ENCODE measurements at regions of chr11 and their contacts with region 1.

Region 1: GRCh38 chr11:83071567-83072349 is at the start of gene RAB30:
- DNase-seq: peak; percentile 97
- H3K4me3 Mint-ChIP-seq: no peak within 1 kb of the TSS
- H3K27ac Mint-ChIP-seq: no peak within 1 kb of the TSS
- H3K4me1 Mint-ChIP-seq: peaks cover 54% of the 10 kb centered on the region
- H3K27me3 Mint-ChIP-seq: no peaks in the 10 kb centered on the region
- total RNA-seq, gene RAB30: 8.8 to 11.1 TPM

Region 2: GRCh38 chr11:82059505-82059904 is 1012.3 kb before region 1 on chr11:
- CTCF ChIA-PET with region 1: no interaction called
- intact Hi-C with region 1: no loop called
- DNase-seq: no peak
- H3K4me3 Mint-ChIP-seq: no peak overlapping the region
- H3K27ac Mint-ChIP-seq: no peak overlapping the region
- H3K4me1 Mint-ChIP-seq: no peaks in the 10 kb centered on the region
- H3K27me3 Mint-ChIP-seq: no peaks in the 10 kb centered on the region

Region 3: DNA sequence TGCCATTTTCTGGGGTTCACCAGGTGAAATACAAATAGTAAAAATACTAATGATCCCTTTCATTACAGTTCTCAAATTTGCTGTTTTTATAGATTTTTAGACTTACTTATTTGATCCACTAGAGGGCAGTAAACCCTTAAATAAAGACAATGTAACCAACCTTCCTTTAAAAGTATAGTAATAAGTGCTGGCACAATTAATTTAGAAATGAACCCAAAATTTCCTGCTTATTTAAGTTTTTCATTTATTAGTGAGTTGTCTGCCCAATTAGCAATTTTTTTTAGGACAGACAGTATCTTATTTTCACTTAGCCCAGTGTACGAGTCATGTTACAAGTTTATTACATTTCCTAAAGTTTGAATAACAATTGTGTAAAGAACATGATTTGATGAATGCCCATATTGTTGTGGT is 165.5 kb before region 1 on chr11:
- CTCF ChIA-PET with region 1: interaction called, 8 read pairs
- intact Hi-C with region 1: loop called (anchors 1 kb)
- DNase-seq: no peak
- H3K4me3 Mint-ChIP-seq: no peak overlapping the region
- H3K27ac Mint-ChIP-seq: no peak overlapping the region
- H3K4me1 Mint-ChIP-seq: peaks cover 61% of the 10 kb centered on the region
- H3K27me3 Mint-ChIP-seq: no peaks in the 10 kb centered on the region

Region 4: GRCh38 chr11:82969811-82970210 is 101.9 kb before region 1 on chr11:
- CTCF ChIA-PET with region 1: no interaction called
- intact Hi-C with region 1: loop called (anchors 2 kb)
- DNase-seq: peak; percentile 41
- H3K4me3 Mint-ChIP-seq: peak overlapping the region; percentile 47
- H3K27ac Mint-ChIP-seq: peak overlapping the region; percentile 59
- H3K4me1 Mint-ChIP-seq: peaks cover 50% of the 10 kb centered on the region
- H3K27me3 Mint-ChIP-seq: no peaks in the 10 kb centered on the region

Region 5: DNA sequence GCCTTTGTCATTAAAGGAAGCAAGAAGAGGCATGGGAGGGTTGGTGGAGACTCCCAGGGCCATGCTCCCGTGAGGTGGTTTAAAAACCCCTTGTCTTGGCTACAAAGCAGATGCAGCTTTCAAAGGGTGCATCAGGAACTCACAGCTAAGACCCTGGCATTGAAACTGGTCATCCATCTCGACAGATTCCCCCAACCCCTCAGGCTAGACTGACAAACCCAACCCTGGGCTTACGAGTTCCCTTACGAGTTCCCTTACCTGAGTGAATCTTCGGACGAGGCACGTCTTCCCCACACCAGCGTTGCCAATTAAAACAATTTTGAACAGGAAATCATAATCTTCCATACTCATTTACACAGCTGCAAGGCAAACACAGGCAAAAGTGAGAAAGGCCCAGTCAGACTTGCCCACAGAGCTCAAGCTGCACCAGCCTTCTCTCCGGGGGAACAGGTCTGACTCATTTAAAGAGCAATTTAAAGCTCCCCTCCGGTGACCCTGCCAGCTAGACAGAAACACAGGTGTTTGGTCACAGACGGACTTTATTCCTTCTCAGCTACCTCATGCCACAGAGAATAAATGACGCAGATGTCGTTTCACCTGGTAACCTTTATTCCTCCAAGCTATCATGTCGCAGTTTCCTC is 74.7 kb before region 1 on chr11:
- CTCF ChIA-PET with region 1: no interaction called
- intact Hi-C with region 1: loop called (anchors 1 kb)
- DNase-seq: peak; percentile 46
- H3K4me3 Mint-ChIP-seq: no peak overlapping the region
- H3K27ac Mint-ChIP-seq: peak overlapping the region; percentile 12
- H3K4me1 Mint-ChIP-seq: peaks cover 78% of the 10 kb centered on the region
- H3K27me3 Mint-ChIP-seq: no peaks in the 10 kb centered on the region

Region 6: GRCh38 chr11:83115551-83115950 is 43.8 kb after region 1 on chr11:
- CTCF ChIA-PET with region 1: no interaction called
- intact Hi-C with region 1: loop called (anchors 1 kb)
- DNase-seq: no peak
- H3K4me3 Mint-ChIP-seq: no peak overlapping the region
- H3K27ac Mint-ChIP-seq: no peak overlapping the region
- H3K4me1 Mint-ChIP-seq: peaks cover 51% of the 10 kb centered on the region
- H3K27me3 Mint-ChIP-seq: no peaks in the 10 kb centered on the region

Region 7: GRCh38 chr11:83156150-83156995 is 84.6 kb after region 1 on chr11:
- CTCF ChIA-PET with region 1: interaction called, 4 read pairs
- intact Hi-C with region 1: loop called (anchors 1 kb)
- DNase-seq: peak; percentile 99
- H3K4me3 Mint-ChIP-seq: peak overlapping the region; percentile 98
- H3K27ac Mint-ChIP-seq: peak overlapping the region; percentile 100
- H3K4me1 Mint-ChIP-seq: peaks cover 26% of the 10 kb centered on the region
- H3K27me3 Mint-ChIP-seq: no peaks in the 10 kb centered on the region

Region 8: GRCh38 chr11:83285771-83286528 is 214.2 kb after region 1 on chr11 and contains the start of gene CCDC90B:
- CTCF ChIA-PET with region 1: no interaction called
- intact Hi-C with region 1: loop called (anchors 1 kb)
- DNase-seq: peak; percentile 97
- H3K4me3 Mint-ChIP-seq: peak within 1 kb of the TSS; percentile 97
- H3K27ac Mint-ChIP-seq: peak within 1 kb of the TSS; percentile 98
- H3K4me1 Mint-ChIP-seq: peaks cover 28% of the 10 kb centered on the region
- H3K27me3 Mint-ChIP-seq: no peaks in the 10 kb centered on the region
- total RNA-seq, gene CCDC90B: 28.2 to 29.5 TPM

Measured in activated naive CD4-positive, alpha-beta T cell treated with anti-CD3 and anti-CD28 coated beads for 36 hours (primary cell).